Naive thymus-derived CD4-positive, alpha-beta T cell (primary cell): ENCODE measurements at regions of chrX and their contacts with region 1.

Region 1: DNA sequence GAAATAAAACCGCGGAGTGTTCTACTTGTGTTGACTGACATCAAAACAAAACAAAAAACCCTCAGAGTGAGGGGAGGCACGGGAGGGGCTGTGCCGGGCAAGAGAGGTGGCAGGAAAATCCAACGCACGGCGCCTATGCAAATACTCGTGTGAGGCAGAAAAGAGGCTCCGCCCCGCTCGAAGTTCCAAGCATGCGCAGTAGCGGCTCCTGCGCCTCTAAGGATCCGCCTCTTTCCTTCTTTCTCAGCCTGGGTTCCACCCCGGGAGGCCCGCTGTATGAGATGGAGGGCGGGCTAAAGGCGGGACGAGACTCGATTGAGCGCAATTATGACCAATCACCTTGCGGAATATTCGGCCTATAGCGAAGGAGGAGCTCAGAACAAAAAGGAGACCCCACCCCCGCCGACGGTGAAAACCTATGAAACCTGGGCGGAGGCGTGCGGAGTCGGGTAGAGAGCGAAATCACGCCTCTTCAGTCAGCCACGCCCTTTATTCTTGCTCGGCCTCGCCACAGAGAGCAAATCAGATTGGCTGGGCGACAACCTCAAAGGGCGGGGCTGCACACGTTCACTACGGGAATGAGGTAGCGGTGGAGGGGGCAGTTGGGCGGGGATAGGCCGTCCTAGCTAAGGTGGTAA is 720 bp upstream of the CDK16 start:
- DNase-seq: peak in 8 of 9 donors; percentile 81 to 100 (median 98)
- ATAC-seq: peak; percentile 86
- H3K4me3 ChIP-seq: peak overlapping the region; percentile 98
- H3K4me3 Mint-ChIP-seq: peak overlapping the region; percentile 89 to 99 (median 95)
- H3K27ac ChIP-seq: peak overlapping the region; percentile 97
- H3K27ac Mint-ChIP-seq: peak overlapping the region; percentile 98 to 100 (median 99)
- H3K4me1 ChIP-seq: peaks cover 16 to 20% of the 10 kb centered on the region in 2 donors
- H3K4me1 Mint-ChIP-seq: peaks cover 26 to 44% (median 41%) of the 10 kb centered on the region in 7 donors
- H3K27me3 ChIP-seq: no peaks in the 10 kb centered on the region
- H3K27me3 Mint-ChIP-seq: peaks cover 0 to 2% (median 0%) of the 10 kb centered on the region in 5 donors

Region 2: GRCh38 chrX:47129157-47129898 is 88.4 kb before region 1 on chrX:
- CTCF ChIA-PET with region 1: no interaction called
- POLR2A ChIA-PET with region 1: no interaction called
- intact Hi-C with region 1: loop called in 1 of 2 experiments (anchors 1 kb)
- DNase-seq: peak; percentile 74 to 94 (median 90)
- ATAC-seq: peak; percentile 99
- H3K4me3 ChIP-seq: peak overlapping the region; percentile 95
- H3K4me3 Mint-ChIP-seq: peak overlapping the region; percentile 76 to 100 (median 97)
- H3K27ac ChIP-seq: peak overlapping the region; percentile 72
- H3K27ac Mint-ChIP-seq: peak overlapping the region; percentile 93 to 99 (median 97)
- H3K4me1 ChIP-seq: no peaks in the 10 kb centered on the region
- H3K4me1 Mint-ChIP-seq: peaks cover 0 to 7% (median 4%) of the 10 kb centered on the region in 7 donors
- H3K27me3 ChIP-seq: no peaks in the 10 kb centered on the region
- H3K27me3 Mint-ChIP-seq: no peaks in the 10 kb centered on the region

Region 3: GRCh38 chrX:47179221-47179920 is 38.4 kb before region 1 on chrX:
- CTCF ChIA-PET with region 1: no interaction called
- POLR2A ChIA-PET with region 1: no interaction called
- intact Hi-C with region 1: no loop called
- DNase-seq: no peak
- ATAC-seq: no peak
- H3K4me3 ChIP-seq: no peak overlapping the region
- H3K4me3 Mint-ChIP-seq: no peak overlapping the region
- H3K27ac ChIP-seq: no peak overlapping the region
- H3K27ac Mint-ChIP-seq: no peak overlapping the region
- H3K4me1 ChIP-seq: no peaks in the 10 kb centered on the region
- H3K4me1 Mint-ChIP-seq: peaks cover 0 to 3% (median 0%) of the 10 kb centered on the region in 7 donors
- H3K27me3 ChIP-seq: no peaks in the 10 kb centered on the region
- H3K27me3 Mint-ChIP-seq: no peaks in the 10 kb centered on the region

Region 4: DNA sequence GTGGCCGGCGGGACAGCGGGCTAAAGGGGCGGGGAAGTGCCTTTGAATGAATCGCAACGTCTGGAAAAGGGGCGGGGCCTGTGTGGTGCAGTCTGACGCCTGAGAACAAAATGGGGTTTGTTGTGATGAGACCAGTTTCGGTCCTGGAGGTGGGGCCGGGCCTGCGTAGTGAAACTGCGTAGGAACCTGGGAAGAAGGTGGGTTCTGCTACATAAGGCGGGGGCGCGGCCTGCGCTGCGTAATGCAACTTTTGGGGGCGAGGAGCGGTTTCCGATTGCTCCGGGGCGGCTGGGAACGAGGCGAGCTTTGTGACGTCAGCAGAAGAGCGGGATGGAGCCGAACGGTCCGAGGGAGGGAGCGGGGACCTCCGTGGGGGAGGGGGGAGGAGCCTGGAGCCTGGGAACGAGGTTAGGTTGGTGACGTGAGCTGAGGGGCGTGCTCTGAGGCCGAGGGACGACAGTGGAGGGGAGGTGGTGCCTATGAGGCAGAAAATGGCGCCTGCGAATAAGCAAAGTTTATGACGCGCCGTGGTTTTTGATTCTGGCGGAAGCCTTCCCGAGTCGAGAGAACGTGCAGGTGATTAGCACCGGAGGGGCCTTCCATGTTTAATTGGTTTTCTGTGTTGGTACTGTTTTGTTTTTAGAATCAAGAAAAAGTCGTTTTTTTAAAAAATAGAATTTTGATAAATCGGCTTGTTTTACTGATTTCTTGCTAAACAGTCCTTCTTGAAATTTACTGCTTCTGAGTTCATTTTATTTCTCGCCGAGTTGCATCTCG is 15.8 kb after region 1 on chrX:
- CTCF ChIA-PET with region 1: no interaction called
- POLR2A ChIA-PET with region 1: interaction called, 72 read pairs
- intact Hi-C with region 1: loop called (anchors 1 kb)
- DNase-seq: peak; percentile 71 to 97 (median 94)
- ATAC-seq: peak; percentile 92
- H3K4me3 ChIP-seq: peak overlapping the region; percentile 74
- H3K4me3 Mint-ChIP-seq: peak overlapping the region; percentile 84 to 98 (median 90)
- H3K27ac ChIP-seq: peak overlapping the region; percentile 99
- H3K27ac Mint-ChIP-seq: peak overlapping the region; percentile 94 to 100 (median 98)
- H3K4me1 ChIP-seq: peaks cover 0 to 14% of the 10 kb centered on the region in 2 donors
- H3K4me1 Mint-ChIP-seq: peaks cover 8 to 49% (median 24%) of the 10 kb centered on the region in 7 donors
- H3K27me3 ChIP-seq: no peaks in the 10 kb centered on the region
- H3K27me3 Mint-ChIP-seq: peaks cover 0 to 4% (median 0%) of the 10 kb centered on the region in 5 donors

Region 5: GRCh38 chrX:47384502-47384901 is 166.7 kb after region 1 on chrX:
- CTCF ChIA-PET with region 1: no interaction called
- POLR2A ChIA-PET with region 1: interaction called, 18 read pairs
- intact Hi-C with region 1: loop called (anchors 1 kb)
- DNase-seq: peak; percentile 27 to 83 (median 67)
- ATAC-seq: peak; percentile 86
- H3K4me3 ChIP-seq: no peak overlapping the region
- H3K4me3 Mint-ChIP-seq: peak overlapping the region in 3 of 10 donors; percentile 31 to 39 (median 37)
- H3K27ac ChIP-seq: no peak overlapping the region
- H3K27ac Mint-ChIP-seq: peak overlapping the region in 3 of 9 donors; percentile 45 to 73 (median 67)
- H3K4me1 ChIP-seq: peaks cover 4 to 10% of the 10 kb centered on the region in 2 donors
- H3K4me1 Mint-ChIP-seq: peaks cover 11 to 39% (median 31%) of the 10 kb centered on the region in 7 donors
- H3K27me3 ChIP-seq: no peaks in the 10 kb centered on the region
- H3K27me3 Mint-ChIP-seq: no peaks in the 10 kb centered on the region

Region 6: GRCh38 chrX:47628980-47629379 is 411.2 kb after region 1 on chrX:
- CTCF ChIA-PET with region 1: no interaction called
- POLR2A ChIA-PET with region 1: no interaction called
- intact Hi-C with region 1: loop called in 1 of 2 experiments (anchors 5 kb)
- DNase-seq: peak in 4 of 9 donors; percentile 14 to 35 (median 30)
- ATAC-seq: peak; percentile 33
- H3K4me3 ChIP-seq: peak overlapping the region; percentile 33
- H3K4me3 Mint-ChIP-seq: peak overlapping the region; percentile 83 to 95 (median 90)
- H3K27ac ChIP-seq: peak overlapping the region; percentile 64
- H3K27ac Mint-ChIP-seq: peak overlapping the region; percentile 72 to 95 (median 89)
- H3K4me1 ChIP-seq: peaks cover 0 to 3% of the 10 kb centered on the region in 2 donors
- H3K4me1 Mint-ChIP-seq: peaks cover 0 to 34% (median 28%) of the 10 kb centered on the region in 7 donors
- H3K27me3 ChIP-seq: no peaks in the 10 kb centered on the region
- H3K27me3 Mint-ChIP-seq: peaks cover 0 to 3% (median 0%) of the 10 kb centered on the region in 5 donors

Region 7: DNA sequence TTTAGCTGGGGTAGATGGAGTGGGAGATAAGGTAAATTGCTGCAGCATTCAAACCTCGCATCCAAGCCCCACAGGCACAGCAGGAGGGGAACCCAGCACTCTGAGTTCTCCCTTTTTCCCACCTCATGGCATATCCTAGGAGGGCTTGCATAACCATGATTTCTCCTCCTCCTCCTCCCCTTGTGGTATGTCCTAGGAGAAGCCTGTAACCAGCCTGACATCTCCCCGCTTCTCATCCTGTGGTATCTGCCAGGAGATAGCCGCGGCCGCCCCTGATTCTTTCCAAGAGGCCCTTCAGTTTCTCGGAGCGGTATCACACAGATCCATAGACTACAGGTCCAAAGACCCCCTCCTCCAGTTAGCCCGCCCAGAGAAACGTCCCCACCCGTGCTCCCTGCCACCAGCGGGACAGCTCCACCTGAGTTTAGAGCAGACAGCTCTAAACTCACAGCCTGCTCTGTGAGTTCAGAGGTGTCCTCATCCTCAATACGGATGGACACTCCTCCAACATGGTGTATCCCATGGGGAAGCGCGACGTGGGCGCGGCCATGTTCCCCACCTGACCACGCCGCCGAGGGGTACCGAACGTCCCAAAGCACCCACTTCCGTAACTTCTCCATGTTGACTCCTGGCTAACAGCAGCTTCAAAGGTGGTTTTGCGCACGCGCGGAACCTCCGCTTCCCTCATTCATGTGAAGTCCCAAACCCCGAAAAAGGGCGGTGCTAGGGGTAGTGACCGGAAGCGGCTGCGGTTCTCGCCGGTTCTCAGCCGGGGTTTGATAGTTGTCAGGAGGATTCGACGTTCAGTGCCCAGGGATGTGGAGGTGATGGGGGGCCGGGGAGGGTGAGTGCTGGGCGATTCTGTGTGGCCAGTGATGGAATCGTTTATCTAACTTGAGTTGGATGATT is 618.7 kb after region 1 on chrX and contains the start of gene ZNF81:
- CTCF ChIA-PET with region 1: no interaction called
- POLR2A ChIA-PET with region 1: no interaction called
- intact Hi-C with region 1: loop called in 1 of 2 experiments (anchors 5 kb)
- DNase-seq: peak; percentile 73 to 91 (median 83)
- ATAC-seq: peak; percentile 96
- H3K4me3 ChIP-seq: peak within 1 kb of the TSS; percentile 67
- H3K4me3 Mint-ChIP-seq: peak within 1 kb of the TSS; percentile 96 to 99 (median 98)
- H3K27ac ChIP-seq: peak within 1 kb of the TSS; percentile 79
- H3K27ac Mint-ChIP-seq: peak within 1 kb of the TSS; percentile 94 to 99 (median 97)
- H3K4me1 ChIP-seq: peaks cover 4 to 6% of the 10 kb centered on the region in 2 donors
- H3K4me1 Mint-ChIP-seq: peaks cover 1 to 36% (median 26%) of the 10 kb centered on the region in 7 donors
- H3K27me3 ChIP-seq: no peaks in the 10 kb centered on the region
- H3K27me3 Mint-ChIP-seq: no peaks in the 10 kb centered on the region
- total RNA-seq, gene ZNF81: 11.0 to 14.7 (median 11.7) TPM